ENCODE measurements at regions of chr4 and their contacts with region 1.

Region 1: DNA sequence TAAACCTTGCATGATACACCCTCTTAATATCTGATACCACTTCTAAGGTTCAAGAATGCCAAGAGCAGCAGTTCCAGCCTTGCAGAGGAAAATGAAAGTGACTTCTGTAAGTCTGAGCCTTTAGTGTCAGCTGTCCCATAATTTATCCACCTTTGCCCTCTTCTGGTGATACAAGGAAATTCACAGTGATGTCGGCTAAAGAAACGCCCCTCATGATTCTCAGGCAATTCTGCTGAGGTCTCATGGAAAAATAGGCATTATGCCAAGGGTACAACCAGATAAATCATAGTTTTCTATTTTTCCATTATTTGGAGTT is 172.2 kb upstream of the CXCL13 start:
- DNase-seq: no peak
- H3K4me3 ChIP-seq: no peak overlapping the region
- H3K27ac ChIP-seq: no peak overlapping the region
- H3K4me1 ChIP-seq: peaks cover 0 to 9% (median 3%) of the 10 kb centered on the region in 4 donors
- H3K27me3 ChIP-seq: no peaks in the 10 kb centered on the region
- CTCF ChIP-seq: peak; percentile 44 to 83 (median 59)
- EP300 ChIP-seq: no peak
- POLR2A ChIP-seq: no peak

Region 2: DNA sequence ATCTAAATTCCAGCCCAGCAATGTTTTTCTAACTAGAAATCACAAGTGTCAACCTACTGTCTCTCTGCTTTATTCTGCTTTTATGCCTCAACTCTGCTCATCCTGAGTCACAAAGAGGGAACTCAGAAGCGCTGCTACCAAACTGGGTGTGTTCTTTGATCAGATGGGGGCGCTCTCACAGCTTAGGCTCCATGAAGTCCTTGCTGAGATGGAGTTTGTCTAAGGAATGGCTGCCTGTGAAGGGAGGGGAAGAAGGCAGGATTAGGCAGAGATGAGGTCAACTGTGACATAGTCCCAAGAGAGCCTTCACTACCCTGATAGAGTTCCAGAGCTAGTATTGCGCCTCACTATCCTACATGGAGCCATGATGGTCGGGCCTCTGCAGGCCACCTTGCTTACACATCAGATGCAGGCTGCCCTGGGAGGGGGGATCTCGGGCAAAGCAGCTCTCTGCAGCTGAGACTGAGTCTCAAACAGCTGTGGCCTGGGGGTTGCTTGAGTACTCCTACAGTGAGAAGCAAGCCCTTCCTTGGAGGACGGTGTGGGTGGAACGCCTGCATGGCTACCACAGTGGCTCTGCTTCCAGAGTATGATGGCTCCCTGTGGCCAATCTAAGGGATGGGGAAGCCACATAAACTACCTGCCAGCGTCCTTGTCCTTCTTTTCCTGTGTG is 56.5 kb before region 1 on chr4:
- in situ Hi-C with region 1: loop called in 2 of 4 experiments (anchors 10 kb)
- intact Hi-C with region 1: no loop called
- DNase-seq: no peak
- H3K4me3 ChIP-seq: no peak overlapping the region
- H3K27ac ChIP-seq: no peak overlapping the region
- H3K4me1 ChIP-seq: no peaks in the 10 kb centered on the region
- H3K27me3 ChIP-seq: no peaks in the 10 kb centered on the region
- CTCF ChIP-seq: no peak
- EP300 ChIP-seq: no peak
- POLR2A ChIP-seq: no peak

Region 3: DNA sequence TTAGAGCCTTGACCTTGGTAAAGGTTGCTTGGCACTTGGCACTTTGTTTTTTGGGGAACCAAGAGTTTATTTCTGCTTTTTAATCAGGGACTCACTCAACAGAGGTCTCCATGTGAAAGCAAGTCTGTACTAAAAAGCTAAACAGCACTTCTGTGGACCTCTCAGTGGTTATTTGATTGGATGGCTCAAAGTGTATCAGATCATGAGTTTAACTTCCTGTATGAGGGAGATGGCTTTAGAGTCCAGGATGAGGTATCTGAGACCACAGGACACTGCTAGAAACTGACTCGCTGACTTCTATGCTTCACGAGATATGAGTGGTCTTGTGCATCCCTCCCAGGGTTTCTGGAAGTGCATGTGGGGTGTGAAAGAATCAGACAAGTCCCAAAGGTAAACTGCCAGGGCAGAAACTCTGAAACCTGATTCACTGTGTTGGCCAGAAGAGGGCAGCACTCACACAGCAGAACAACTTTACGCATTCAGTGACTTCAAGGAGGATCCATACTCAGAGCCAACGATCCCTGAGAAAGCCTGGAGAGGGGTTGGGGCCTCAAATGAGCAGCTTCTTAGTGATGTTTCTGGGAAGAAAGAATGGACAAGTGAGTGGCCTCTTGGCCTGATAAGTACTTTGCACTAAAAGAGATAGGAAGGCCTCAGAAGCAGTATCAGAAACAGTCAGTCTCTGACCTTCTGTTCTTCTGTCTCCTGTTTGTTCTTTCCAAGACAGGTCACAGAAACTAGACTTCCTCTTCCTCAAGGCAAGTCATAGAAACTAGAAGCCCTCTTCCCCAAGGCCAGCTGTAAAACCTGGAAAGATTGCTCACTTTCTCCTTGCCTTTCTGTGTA is 48.0 kb before region 1 on chr4:
- in situ Hi-C with region 1: loop called in 1 of 4 experiments (anchors 10 kb)
- intact Hi-C with region 1: no loop called
- DNase-seq: peak; percentile 71
- H3K4me3 ChIP-seq: no peak overlapping the region
- H3K27ac ChIP-seq: no peak overlapping the region
- H3K4me1 ChIP-seq: no peaks in the 10 kb centered on the region
- H3K27me3 ChIP-seq: no peaks in the 10 kb centered on the region
- CTCF ChIP-seq: peak; percentile 66 to 83 (median 76)
- EP300 ChIP-seq: no peak
- POLR2A ChIP-seq: no peak

Region 4: DNA sequence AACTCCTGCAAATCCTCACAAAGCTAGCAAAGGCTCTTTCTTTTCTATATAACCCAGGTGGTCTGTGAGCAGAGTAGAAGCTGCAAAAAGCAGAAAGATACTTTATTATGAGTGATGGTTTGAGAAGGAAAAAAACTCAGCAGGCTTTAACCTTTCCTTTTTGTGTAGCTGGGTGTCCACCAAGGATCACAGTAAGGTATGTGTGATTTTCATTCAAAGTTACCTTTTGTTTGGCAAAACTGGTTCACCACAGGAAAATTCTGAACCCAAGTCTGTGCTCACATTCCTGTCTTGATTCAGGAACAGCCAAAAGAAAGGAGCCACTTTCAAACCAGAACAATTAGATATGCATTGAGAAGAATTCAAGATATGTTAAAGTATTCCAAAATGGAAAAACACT is 659.5 kb after region 1 on chr4:
- in situ Hi-C with region 1: no loop called
- intact Hi-C with region 1: no loop called
- DNase-seq: no peak
- H3K4me3 ChIP-seq: no peak overlapping the region
- H3K27ac ChIP-seq: no peak overlapping the region
- H3K4me1 ChIP-seq: no peaks in the 10 kb centered on the region
- H3K27me3 ChIP-seq: no peaks in the 10 kb centered on the region
- CTCF ChIP-seq: no peak
- EP300 ChIP-seq: no peak
- POLR2A ChIP-seq: no peak

Measured in transverse colon (tissue), 4 donors.